Ascending aorta (tissue), 2 donors: ENCODE measurements at regions of chr3 and their contacts with region 1.

Region 1: GRCh38 chr3:133805527-133806475 is at the start of gene SRPRB:
- DNase-seq: peak; percentile 76 to 97
- H3K4me3 ChIP-seq: peak within 1 kb of the TSS; percentile 87
- H3K27ac ChIP-seq: peak within 1 kb of the TSS; percentile 54 to 58
- H3K4me1 ChIP-seq: peaks cover 0 to 3% of the 10 kb centered on the region in 2 donors
- H3K27me3 ChIP-seq: no peaks in the 10 kb centered on the region
- CTCF ChIP-seq: no peak
- total RNA-seq, gene SRPRB: 16.1 TPM

Region 2: GRCh38 chr3:134485718-134486576 is 680.1 kb after region 1 on chr3 and contains the starts of genes ANAPC13 and CEP63:
- intact Hi-C with region 1: loop called (anchors 10 kb)
- DNase-seq: peak; percentile 80 to 98
- H3K4me3 ChIP-seq: peak within 1 kb of the TSS; percentile 78 to 92
- H3K27ac ChIP-seq: peak within 1 kb of the TSS; percentile 95 to 98
- H3K4me1 ChIP-seq: peaks cover 26 to 38% of the 10 kb centered on the region in 2 donors
- H3K27me3 ChIP-seq: no peaks in the 10 kb centered on the region
- CTCF ChIP-seq: no peak
- total RNA-seq, gene ANAPC13: 17.0 TPM
- total RNA-seq, gene CEP63: 5.3 TPM